Activated CD4-positive, alpha-beta memory T cell treated with anti-CD3 and anti-CD28 coated beads for 36 hours (primary cell): ENCODE measurements at regions of chr2 and their contacts with region 1.

Region 1: DNA sequence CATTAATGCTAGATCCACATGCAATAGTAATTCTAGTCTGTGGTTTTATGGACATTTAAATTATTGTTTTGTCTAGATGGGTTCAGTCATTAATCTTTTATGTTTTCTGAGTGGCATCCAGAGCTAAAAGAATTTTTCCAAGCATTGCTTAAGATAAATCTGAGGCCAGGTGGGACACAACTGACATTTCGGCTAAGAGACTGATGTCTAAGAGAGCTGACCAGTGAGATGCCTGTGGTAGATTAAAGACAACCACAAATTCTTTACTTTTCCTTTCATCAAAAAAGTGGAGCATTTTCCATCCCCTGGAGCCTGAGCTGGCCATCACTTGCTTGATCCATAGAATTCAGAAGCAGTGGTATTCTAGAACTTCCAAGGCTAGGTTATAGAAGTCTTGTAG is 182.2 kb downstream of the NRP2 start:
- DNase-seq: no peak
- H3K4me3 Mint-ChIP-seq: no peak overlapping the region
- H3K27ac Mint-ChIP-seq: no peak overlapping the region
- H3K4me1 Mint-ChIP-seq: peaks cover 16% of the 10 kb centered on the region
- H3K27me3 Mint-ChIP-seq: peaks cover 25% of the 10 kb centered on the region

Region 2: DNA sequence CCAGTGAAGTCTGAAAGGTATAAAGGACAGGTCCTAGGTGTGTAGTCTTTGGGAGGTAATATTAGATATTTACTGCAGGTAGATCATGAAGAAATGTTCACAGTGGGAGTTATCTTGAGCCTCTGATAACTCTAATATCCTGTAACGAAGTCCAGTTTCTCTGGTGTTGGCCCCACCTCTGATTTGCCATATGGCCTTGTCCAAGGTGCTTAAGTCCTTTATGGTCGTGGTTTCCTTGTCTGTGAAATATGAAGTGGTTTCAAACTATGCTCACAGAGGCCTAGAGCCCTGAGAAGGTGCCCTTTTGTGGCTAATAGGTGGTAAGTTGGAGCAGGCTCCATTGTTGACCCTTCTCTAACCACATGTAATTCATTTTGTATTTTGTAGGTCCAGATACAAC is 1737.3 kb before region 1 on chr2:
- CTCF ChIA-PET with region 1: no interaction called
- POLR2A ChIA-PET with region 1: no interaction called
- intact Hi-C with region 1: no loop called
- DNase-seq: no peak
- H3K4me3 Mint-ChIP-seq: no peak overlapping the region
- H3K27ac Mint-ChIP-seq: no peak overlapping the region
- H3K4me1 Mint-ChIP-seq: peaks cover 5% of the 10 kb centered on the region
- H3K27me3 Mint-ChIP-seq: peaks cover 10% of the 10 kb centered on the region

Region 3: GRCh38 chr2:205763708-205764211 is 100.7 kb before region 1 on chr2:
- CTCF ChIA-PET with region 1: no interaction called
- POLR2A ChIA-PET with region 1: no interaction called
- intact Hi-C with region 1: no loop called
- DNase-seq: peak; percentile 28
- H3K4me3 Mint-ChIP-seq: no peak overlapping the region
- H3K27ac Mint-ChIP-seq: no peak overlapping the region
- H3K4me1 Mint-ChIP-seq: peaks cover 2% of the 10 kb centered on the region
- H3K27me3 Mint-ChIP-seq: peaks cover 21% of the 10 kb centered on the region

Region 4: DNA sequence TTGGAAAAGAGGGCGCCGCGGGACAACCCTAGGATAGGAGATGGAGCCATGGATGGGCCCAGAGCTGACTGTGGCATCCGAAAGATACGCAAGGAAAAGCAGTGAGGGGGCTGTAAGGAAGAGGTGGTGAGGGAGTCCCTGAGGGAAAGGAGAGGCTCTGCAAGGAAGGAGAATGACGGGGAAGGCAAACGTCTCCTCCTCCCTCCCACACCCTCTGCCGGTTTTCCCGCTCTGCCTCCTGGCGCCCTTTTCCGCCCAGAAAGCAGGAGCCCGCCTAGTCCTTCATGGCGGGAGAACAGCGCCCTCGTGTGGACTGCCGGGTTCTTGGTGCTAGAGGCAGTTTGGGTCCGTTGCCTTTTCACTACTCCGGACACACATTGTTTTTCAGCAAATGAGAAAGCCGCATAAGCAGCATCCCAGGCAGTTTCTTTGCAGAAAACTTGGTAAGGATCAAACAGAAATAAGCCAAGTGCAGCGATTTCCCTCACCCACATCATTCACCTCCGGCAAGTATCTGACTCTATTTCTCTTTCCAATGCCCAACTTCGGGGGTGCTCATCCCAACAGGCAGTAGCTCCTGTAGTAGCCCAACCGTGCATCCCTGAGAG is 21.1 kb after region 1 on chr2:
- CTCF ChIA-PET with region 1: interaction called, 10 read pairs
- POLR2A ChIA-PET with region 1: no interaction called
- intact Hi-C with region 1: no loop called
- DNase-seq: peak; percentile 81
- H3K4me3 Mint-ChIP-seq: no peak overlapping the region
- H3K27ac Mint-ChIP-seq: no peak overlapping the region
- H3K4me1 Mint-ChIP-seq: no peaks in the 10 kb centered on the region
- H3K27me3 Mint-ChIP-seq: peaks cover 15% of the 10 kb centered on the region